Activated CD4-positive, alpha-beta memory T cell treated with anti-CD3 and anti-CD28 coated beads for 36 hours (primary cell): ENCODE measurements at regions of chr11 and their contacts with region 1.

Region 1: DNA sequence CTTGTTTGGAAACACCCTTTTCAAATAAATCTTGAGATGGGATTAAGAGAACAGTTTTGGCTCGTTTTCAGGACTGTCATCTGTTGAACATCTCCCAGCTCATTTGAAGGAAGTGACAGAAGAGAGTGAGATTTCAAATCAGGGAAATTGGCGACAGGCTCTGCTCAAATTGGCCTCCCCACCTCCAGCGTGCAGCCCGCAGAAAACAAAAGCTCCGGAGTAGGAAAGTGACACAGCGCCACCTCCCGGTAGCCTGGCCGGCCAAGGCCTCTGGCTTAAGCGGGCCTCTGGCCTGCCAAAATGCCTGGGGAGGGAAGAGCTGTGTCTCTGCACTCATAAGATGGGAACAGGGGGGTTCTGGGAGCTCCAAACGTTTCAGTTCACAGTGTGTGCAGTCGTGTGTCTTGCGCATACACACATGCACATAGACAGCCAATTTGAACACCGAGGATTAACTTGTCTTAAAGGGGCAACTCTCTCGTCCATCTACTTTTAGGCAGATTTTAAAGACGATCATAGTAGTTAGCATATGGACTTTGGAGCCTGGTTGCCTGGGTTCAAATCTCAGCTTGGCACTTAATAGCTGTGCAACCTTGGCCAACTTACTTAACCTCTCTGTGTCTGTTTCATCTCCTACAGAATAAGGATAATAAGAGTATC is 132.7 kb upstream of the RCN1 start:
- DNase-seq: peak; percentile 76
- H3K4me3 Mint-ChIP-seq: no peak overlapping the region
- H3K27ac Mint-ChIP-seq: no peak overlapping the region
- H3K4me1 Mint-ChIP-seq: peaks cover 4% of the 10 kb centered on the region
- H3K27me3 Mint-ChIP-seq: no peaks in the 10 kb centered on the region

Region 2: DNA sequence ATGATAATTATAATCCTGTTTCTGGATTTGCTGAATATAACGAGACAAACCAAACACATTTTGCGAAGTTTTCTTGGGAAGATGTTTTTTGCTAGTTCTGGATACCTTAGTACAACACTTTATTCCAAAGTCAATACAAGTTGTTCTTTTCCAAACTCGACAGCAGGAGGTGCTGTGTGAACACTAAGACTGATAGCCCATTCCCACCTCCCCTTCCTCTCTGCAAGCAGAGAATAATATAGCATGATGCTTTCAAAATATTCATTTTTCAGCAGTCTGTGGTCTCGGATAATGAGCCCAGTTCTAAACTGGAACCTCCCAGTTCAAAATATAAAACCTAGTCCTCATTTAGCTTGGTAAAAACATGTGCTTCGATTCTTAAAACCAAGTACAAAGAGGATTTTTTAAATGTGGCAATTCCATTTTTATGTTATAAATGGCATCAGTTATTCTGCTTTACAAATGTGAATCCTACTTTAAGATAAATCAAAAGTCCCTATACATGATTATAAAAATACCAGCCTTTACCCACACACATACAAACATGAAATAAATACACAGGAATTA is 717.8 kb before region 1 on chr11:
- CTCF ChIA-PET with region 1: interaction called, 21 read pairs
- POLR2A ChIA-PET with region 1: no interaction called
- intact Hi-C with region 1: loop called (anchors 1 kb)
- DNase-seq: peak; percentile 10
- H3K4me3 Mint-ChIP-seq: no peak overlapping the region
- H3K27ac Mint-ChIP-seq: no peak overlapping the region
- H3K4me1 Mint-ChIP-seq: no peaks in the 10 kb centered on the region
- H3K27me3 Mint-ChIP-seq: no peaks in the 10 kb centered on the region

Region 3: GRCh38 chr11:31397239-31397834 is 560.9 kb before region 1 on chr11:
- CTCF ChIA-PET with region 1: interaction called, 11 read pairs
- POLR2A ChIA-PET with region 1: no interaction called
- intact Hi-C with region 1: loop called (anchors 2 kb)
- DNase-seq: no peak
- H3K4me3 Mint-ChIP-seq: no peak overlapping the region
- H3K27ac Mint-ChIP-seq: no peak overlapping the region
- H3K4me1 Mint-ChIP-seq: no peaks in the 10 kb centered on the region
- H3K27me3 Mint-ChIP-seq: no peaks in the 10 kb centered on the region

Region 4: DNA sequence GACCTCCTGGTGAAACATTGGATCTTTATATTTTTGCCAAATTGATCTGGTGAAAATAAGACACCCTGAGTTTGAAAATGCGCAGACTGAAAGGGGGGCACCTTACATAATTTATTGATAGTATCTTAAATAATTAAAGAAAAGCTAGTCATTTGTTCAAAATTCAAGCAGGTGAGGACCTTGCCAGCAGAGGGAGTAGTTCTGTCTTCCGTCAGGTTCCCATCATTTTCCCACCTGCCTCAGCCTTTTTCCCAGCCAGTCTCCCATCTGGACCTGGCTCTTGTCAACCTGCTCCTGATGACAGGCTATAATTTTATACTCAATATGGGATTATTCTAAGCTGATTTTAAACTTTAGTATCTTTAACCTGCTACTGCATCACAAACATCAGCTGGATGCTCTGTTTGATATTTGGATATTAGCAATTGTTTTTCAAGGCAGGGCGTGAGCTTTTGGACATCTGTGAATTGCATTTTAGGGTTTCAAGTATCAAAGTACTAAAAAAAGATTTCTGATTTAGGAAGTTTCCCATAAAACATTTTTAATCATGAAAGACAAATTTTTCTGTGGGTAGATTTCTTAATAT is 316.6 kb before region 1 on chr11:
- CTCF ChIA-PET with region 1: interaction called, 16 read pairs
- POLR2A ChIA-PET with region 1: no interaction called
- intact Hi-C with region 1: loop called (anchors 10 kb)
- DNase-seq: no peak
- H3K4me3 Mint-ChIP-seq: no peak overlapping the region
- H3K27ac Mint-ChIP-seq: no peak overlapping the region
- H3K4me1 Mint-ChIP-seq: no peaks in the 10 kb centered on the region
- H3K27me3 Mint-ChIP-seq: no peaks in the 10 kb centered on the region